Activated CD8-positive, alpha-beta T cell treated with anti-CD3 and anti-CD28 coated beads, Interleukin-2, amount 10 ng/mL, durations not matched to agents 7 days and 5 days (primary cell): ENCODE measurements at regions of chr16 and their contacts with region 1.

Region 1: DNA sequence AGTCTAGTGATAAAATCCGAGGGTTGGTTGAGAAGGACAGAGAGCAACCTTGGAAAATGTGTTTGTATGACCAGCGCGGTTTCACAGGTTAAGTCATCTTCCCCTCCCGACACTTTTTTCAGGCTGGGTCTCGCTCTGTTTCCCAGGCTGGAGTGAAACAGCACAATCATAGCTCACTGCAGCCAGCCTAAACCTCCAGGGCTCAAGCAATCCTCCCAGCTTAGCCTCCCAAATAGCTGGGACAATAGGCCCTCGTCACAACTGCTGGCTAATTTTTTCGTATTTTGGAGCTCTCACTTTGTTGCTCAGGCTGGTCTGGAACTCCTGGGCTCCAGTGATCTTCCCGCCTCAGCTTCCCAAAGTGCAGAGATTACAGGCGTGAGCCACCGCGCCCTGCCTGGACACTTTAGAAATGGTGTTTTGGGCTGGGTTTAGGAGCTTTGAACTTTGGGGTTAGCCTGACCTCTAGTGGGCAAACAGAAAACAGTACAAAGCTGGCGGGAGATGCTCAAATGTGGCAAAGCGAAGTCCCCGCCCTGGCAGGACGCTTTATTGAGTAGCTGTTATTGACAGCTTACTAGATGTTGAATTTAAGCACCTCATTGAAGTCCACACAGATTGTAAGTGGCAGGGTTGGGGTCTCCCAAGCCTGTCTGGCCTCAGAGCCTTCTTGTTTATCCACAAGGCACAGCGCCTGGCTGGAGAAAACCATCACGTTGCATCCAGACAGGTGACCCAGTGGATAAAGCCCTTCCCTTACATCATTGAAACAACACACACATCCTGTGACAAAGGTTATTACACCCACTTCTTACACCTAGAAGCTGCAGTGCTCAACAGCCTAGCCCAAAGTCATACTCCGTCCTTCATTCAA is 34.7 kb upstream of the RBBP6 start:
- DNase-seq: peak; percentile 75
- ATAC-seq: peak; percentile 93
- H3K4me3 Mint-ChIP-seq: no peak overlapping the region
- H3K27ac Mint-ChIP-seq: no peak overlapping the region
- H3K4me1 Mint-ChIP-seq: no peaks in the 10 kb centered on the region
- H3K27me3 Mint-ChIP-seq: peaks cover 8% of the 10 kb centered on the region

Region 2: DNA sequence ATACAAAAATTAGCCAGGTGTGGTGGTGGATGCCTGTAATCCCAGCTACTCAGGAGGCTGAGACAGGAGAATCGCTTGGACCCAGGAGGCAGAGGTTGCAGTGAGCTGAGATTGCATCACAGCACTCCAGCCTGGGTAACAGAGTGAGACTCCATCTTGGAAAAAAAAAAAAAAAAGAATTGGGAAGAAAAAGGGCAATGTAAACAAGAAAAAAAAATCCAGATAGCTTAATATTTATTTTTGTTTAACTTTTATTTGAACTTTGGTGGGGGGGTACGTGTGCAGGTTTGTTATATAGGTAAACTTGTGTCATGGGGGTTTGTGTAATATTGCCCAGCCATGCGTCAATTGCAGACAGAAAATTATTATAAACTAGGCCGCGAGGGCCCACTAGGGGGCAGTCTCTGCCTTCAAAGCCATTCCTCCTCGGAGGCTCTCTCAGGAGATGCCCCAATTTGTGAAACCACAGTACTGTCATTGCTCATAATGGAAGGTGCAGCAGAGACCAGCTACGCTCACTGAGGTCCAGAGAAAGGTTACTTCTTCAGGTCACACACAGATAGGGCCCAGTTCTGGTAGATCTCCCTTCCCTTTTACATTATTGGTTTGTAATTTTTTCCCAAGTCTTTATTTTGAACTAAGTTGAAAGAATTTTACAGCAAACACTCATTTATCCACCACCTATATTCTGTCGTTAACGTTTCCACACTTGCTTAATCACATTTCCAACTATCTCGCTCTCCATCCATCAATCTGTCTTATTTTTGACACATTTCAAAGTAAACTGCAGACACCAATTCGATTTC is 462.7 kb before region 1 on chr16:
- CTCF ChIA-PET with region 1: interaction called, 43 read pairs
- POLR2A ChIA-PET with region 1: no interaction called
- DNase-seq: peak; percentile 86
- ATAC-seq: peak; percentile 87
- H3K4me3 Mint-ChIP-seq: no peak overlapping the region
- H3K27ac Mint-ChIP-seq: no peak overlapping the region
- H3K4me1 Mint-ChIP-seq: peaks cover 11% of the 10 kb centered on the region
- H3K27me3 Mint-ChIP-seq: no peaks in the 10 kb centered on the region

Region 3: GRCh38 chr16:24070851-24071250 is 433.9 kb before region 1 on chr16:
- CTCF ChIA-PET with region 1: interaction called, 10 read pairs
- POLR2A ChIA-PET with region 1: no interaction called
- DNase-seq: peak; percentile 47
- ATAC-seq: peak; percentile 81
- H3K4me3 Mint-ChIP-seq: no peak overlapping the region
- H3K27ac Mint-ChIP-seq: no peak overlapping the region
- H3K4me1 Mint-ChIP-seq: peaks cover 25% of the 10 kb centered on the region
- H3K27me3 Mint-ChIP-seq: no peaks in the 10 kb centered on the region

Region 4: DNA sequence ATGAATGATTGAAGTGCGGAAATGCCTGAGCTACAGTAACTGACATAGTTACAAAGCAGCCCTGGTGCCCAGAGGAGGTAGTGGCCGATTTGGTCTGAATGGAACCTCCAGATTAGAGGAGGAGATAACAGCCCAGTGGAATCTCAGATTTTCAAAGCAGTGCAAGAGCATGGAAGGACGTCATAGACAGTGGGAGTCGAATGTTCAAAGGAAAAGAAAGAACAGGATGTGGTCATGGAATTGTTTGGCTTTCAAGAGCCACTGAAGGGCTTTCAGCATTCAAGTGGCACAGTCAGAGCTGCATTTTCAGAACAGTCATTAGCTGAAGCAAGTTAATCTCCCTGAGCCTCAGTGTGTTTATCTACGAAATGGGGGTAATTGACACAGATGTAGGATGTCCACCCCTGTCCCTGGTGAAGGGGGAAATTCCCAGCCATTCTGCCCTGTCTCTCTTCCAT is 353.2 kb before region 1 on chr16:
- CTCF ChIA-PET with region 1: no interaction called
- POLR2A ChIA-PET with region 1: no interaction called
- DNase-seq: peak; percentile 27
- ATAC-seq: peak; percentile 74
- H3K4me3 Mint-ChIP-seq: no peak overlapping the region
- H3K27ac Mint-ChIP-seq: peak overlapping the region; percentile 25
- H3K4me1 Mint-ChIP-seq: peaks cover 33% of the 10 kb centered on the region
- H3K27me3 Mint-ChIP-seq: no peaks in the 10 kb centered on the region

Region 5: DNA sequence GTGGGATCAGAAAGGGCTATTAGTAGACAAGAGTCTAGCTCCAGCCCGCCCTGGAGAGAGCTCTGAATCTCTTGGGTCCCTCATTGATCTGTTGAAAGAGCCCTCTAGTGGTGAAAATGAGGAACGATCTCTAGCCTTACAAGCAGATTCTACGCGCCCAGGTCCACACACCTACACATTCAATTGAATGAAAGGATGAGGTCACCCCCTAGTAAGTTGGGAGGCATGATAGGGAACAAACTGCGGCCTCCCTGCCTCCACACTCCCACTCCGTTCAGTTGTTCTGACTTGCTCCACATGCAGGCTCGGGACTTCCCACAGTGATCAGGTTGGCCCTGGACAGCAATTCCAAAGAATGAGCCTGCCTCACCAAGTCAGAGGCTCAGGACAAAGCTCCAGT is 251.5 kb before region 1 on chr16:
- CTCF ChIA-PET with region 1: interaction called, 26 read pairs
- POLR2A ChIA-PET with region 1: no interaction called
- DNase-seq: peak; percentile 49
- ATAC-seq: peak; percentile 47
- H3K4me3 Mint-ChIP-seq: no peak overlapping the region
- H3K27ac Mint-ChIP-seq: no peak overlapping the region
- H3K4me1 Mint-ChIP-seq: peaks cover 3% of the 10 kb centered on the region
- H3K27me3 Mint-ChIP-seq: peaks cover 40% of the 10 kb centered on the region

Region 6: GRCh38 chr16:24440306-24440705 is 64.4 kb before region 1 on chr16:
- CTCF ChIA-PET with region 1: no interaction called
- POLR2A ChIA-PET with region 1: no interaction called
- DNase-seq: no peak
- ATAC-seq: no peak
- H3K4me3 Mint-ChIP-seq: no peak overlapping the region
- H3K27ac Mint-ChIP-seq: no peak overlapping the region
- H3K4me1 Mint-ChIP-seq: no peaks in the 10 kb centered on the region
- H3K27me3 Mint-ChIP-seq: no peaks in the 10 kb centered on the region

Region 7: GRCh38 chr16:24491726-24492125 is 13.0 kb before region 1 on chr16:
- CTCF ChIA-PET with region 1: interaction called, 11 read pairs
- POLR2A ChIA-PET with region 1: no interaction called
- DNase-seq: no peak
- ATAC-seq: no peak
- H3K4me3 Mint-ChIP-seq: no peak overlapping the region
- H3K27ac Mint-ChIP-seq: no peak overlapping the region
- H3K4me1 Mint-ChIP-seq: no peaks in the 10 kb centered on the region
- H3K27me3 Mint-ChIP-seq: peaks cover 11% of the 10 kb centered on the region

Region 8: DNA sequence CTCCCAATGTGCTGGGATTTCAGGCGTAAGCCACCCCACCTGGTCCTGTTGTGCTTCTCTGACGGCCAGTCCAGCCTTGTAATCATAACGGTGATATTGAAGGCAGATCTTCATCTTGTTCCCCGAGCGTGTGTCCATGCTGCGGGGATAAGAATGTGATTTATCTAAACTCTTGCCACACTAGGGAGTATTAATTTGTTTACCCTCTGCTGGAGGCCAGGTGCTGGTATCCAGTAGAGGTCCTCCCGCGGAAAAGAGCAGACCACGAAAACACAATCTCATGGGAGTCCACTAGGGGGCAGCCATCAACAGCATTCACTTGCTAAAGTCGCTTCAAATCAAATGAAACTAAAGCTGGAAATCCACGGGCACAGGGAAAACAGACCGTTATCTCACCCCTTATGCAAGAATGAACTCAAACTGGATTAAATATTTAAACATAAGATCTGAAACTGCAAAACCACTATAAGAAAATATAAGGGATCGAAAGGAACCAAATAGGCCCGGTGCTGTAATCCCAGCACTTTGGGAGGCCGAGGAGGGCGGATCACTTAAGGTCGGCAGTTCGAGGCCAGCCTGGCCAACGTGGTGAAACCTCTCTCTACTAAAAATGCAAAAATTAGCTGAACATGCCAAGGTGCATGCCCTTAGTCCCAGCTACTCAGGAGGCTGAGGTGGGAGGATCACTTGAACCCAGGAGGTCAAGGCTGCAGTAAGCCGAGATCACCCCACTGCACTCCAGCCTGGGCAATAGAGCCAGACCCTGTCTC is 12.4 kb after region 1 on chr16:
- CTCF ChIA-PET with region 1: interaction called, 29 read pairs
- POLR2A ChIA-PET with region 1: no interaction called
- DNase-seq: peak; percentile 84
- ATAC-seq: peak; percentile 79
- H3K4me3 Mint-ChIP-seq: peak overlapping the region; percentile 47
- H3K27ac Mint-ChIP-seq: no peak overlapping the region
- H3K4me1 Mint-ChIP-seq: peaks cover 14% of the 10 kb centered on the region
- H3K27me3 Mint-ChIP-seq: no peaks in the 10 kb centered on the region

Region 9: DNA sequence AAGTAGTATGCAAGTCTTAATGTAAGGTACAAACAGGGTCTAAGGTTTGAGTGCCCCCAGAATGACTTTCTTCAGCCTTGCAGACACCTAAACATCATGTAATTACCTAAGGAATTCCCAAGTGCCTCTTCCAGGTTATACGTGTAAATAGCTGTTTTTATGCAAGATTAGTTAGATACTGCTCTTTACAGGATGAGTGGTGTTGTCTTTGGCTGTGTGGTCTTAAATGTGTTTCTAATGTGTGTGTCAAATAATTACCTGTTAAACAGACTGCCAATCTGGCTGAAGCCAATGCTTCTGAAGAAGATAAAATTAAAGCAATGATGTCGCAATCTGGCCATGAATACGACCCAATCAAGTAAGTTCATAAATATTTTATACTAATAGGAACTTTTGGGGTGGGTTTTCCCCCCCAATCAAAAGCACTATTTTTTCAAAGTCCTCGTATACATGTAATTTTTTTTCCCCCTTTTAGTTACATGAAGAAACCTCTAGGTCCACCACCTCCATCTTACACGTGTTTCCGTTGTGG is 50.7 kb after region 1 on chr16:
- CTCF ChIA-PET with region 1: no interaction called
- POLR2A ChIA-PET with region 1: no interaction called
- DNase-seq: no peak
- ATAC-seq: no peak
- H3K4me3 Mint-ChIP-seq: no peak overlapping the region
- H3K27ac Mint-ChIP-seq: no peak overlapping the region
- H3K4me1 Mint-ChIP-seq: peaks cover 10% of the 10 kb centered on the region
- H3K27me3 Mint-ChIP-seq: no peaks in the 10 kb centered on the region

Region 10: GRCh38 chr16:24626256-24626655 is 121.5 kb after region 1 on chr16:
- CTCF ChIA-PET with region 1: no interaction called
- POLR2A ChIA-PET with region 1: no interaction called
- DNase-seq: no peak
- ATAC-seq: no peak
- H3K4me3 Mint-ChIP-seq: no peak overlapping the region
- H3K27ac Mint-ChIP-seq: no peak overlapping the region
- H3K4me1 Mint-ChIP-seq: no peaks in the 10 kb centered on the region
- H3K27me3 Mint-ChIP-seq: peaks cover 4% of the 10 kb centered on the region